Posterior vena cava (tissue), 2 donors: ENCODE measurements at regions of chr2 and their contacts with region 1.

Region 1: GRCh38 chr2:223896833-223897311 is 48.3 kb downstream of the WDFY1 start:
- DNase-seq: no peak

Region 2: GRCh38 chr2:222364285-222364895 is 1532.5 kb before region 1 on chr2:
- intact Hi-C with region 1: loop called in 1 of 2 experiments (anchors 10 kb)
- DNase-seq: no peak

Region 3: DNA sequence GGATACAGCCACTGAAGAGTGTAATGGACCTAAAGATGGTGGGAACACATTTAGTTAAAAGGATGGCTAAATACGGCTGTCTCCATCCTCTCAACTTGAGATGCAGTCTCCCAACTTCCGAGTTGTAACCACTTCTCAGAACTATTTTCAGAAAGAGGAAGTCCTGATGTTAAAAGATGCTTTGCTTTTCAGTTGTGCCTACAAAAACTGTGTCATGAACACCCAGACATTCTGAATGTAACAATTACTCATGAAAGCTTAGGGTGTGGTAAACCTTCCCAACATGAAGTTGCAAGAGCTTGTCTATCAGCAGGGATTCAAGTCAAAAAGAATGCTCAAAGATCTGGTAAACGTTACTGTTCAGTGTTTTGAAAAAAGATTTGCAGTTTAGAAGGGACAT is 997.5 kb after region 1 on chr2:
- intact Hi-C with region 1: loop called in 1 of 2 experiments (anchors 5 kb)
- DNase-seq: no peak